ENCODE measurements at regions of chr12 and their contacts with region 1.

Region 1: DNA sequence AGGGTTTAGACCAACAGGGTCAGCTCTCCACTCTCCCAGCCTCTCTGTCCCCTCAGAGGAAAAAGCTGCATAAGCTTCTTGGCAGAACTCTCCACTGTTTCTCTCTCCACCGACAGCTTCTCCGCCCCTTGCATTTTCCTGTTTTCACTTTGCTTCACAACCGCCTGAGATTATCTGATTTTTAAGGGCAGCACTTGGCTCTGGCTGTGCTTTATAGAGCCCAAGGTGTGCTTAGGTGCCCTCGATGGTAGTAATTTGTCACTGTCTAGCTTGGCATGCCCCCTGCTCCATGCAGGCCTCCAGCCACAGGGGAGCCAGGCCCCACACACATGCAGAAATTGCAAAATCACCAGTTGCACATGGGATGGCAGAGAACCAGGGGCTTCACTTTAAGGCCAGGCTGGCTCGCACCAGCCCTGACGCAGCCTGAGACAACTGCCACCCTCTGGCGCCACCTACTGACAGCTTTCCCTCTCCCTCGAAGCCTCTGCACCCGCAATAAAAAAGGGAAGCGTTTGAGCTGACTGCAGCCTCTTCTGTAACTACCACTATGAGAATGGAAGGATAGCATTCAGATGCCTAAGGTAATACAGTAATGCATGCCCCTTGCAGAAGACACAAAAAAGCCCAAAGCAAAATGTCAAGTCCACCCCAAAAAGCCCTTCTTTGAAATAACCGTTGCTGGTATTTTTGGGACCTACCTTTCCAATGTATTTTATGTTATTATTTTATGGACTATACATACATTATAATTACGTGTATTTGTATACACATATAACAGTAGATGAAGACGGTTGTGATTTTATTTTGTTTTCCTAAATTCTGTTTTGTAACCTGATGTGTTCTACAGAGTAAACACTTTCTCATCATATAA is 32.0 kb upstream of the RIMBP2 start:
- DNase-seq: peak; percentile 64 to 83 (median 70)
- ATAC-seq: peak; percentile 61 to 90 (median 88)
- H3K4me3 ChIP-seq: no peak overlapping the region
- H3K27ac ChIP-seq: no peak overlapping the region
- H3K4me1 ChIP-seq: peaks cover 0 to 4% (median 0%) of the 10 kb centered on the region in 12 donors
- H3K27me3 ChIP-seq: peaks cover 0 to 36% (median 3%) of the 10 kb centered on the region in 9 donors
- CTCF ChIP-seq: peak; percentile 66 to 90 (median 82)
- POLR2A ChIP-seq: no peak

Region 2: GRCh38 chr12:130041983-130042812 is 705.9 kb before region 1 on chr12:
- intact Hi-C with region 1: loop called in 5 of 10 experiments (anchors 5 to 10 kb)
- DNase-seq: peak in 1 of 5 donors; percentile 29
- ATAC-seq: no peak
- H3K4me3 ChIP-seq: no peak overlapping the region
- H3K27ac ChIP-seq: no peak overlapping the region
- H3K4me1 ChIP-seq: no peaks in the 10 kb centered on the region
- H3K27me3 ChIP-seq: peaks cover 19 to 90% (median 41%) of the 10 kb centered on the region in 9 donors
- CTCF ChIP-seq: peak; percentile 49 to 79 (median 68)
- POLR2A ChIP-seq: no peak

Region 3: DNA sequence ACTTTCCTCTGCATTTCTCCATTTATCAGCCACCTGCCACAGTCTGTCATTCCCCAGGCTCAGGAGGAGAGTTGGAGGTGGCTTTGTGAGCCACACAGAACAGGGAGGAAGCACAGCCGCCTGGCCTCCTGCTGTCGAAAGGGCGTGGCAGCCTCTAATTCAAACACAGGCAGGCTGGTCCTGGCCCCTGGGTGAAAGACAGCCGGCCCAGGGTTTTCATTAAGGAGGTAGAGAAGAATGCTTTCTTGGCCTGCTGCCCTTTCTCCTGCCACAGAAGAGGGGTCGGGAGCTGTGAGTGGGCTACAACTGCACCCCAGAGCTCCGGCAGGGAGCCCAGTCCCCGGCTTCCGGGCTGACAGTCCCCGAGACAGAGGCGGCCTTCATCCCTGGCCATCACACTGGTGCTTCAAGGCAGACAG is 694.4 kb before region 1 on chr12:
- intact Hi-C with region 1: loop called in 6 of 10 experiments (anchors 5 to 10 kb)
- DNase-seq: no peak
- ATAC-seq: no peak
- H3K4me3 ChIP-seq: no peak overlapping the region
- H3K27ac ChIP-seq: no peak overlapping the region
- H3K4me1 ChIP-seq: no peaks in the 10 kb centered on the region
- H3K27me3 ChIP-seq: peaks cover 0 to 38% (median 7%) of the 10 kb centered on the region in 9 donors
- CTCF ChIP-seq: no peak
- POLR2A ChIP-seq: no peak

Region 4: GRCh38 chr12:130394906-130395305 is 353.2 kb before region 1 on chr12:
- intact Hi-C with region 1: loop called in 8 of 10 experiments (anchors 2 to 10 kb)
- DNase-seq: no peak
- ATAC-seq: no peak
- H3K4me3 ChIP-seq: no peak overlapping the region
- H3K27ac ChIP-seq: no peak overlapping the region
- H3K4me1 ChIP-seq: no peaks in the 10 kb centered on the region
- H3K27me3 ChIP-seq: peaks cover 0 to 8% (median 0%) of the 10 kb centered on the region in 9 donors
- CTCF ChIP-seq: no peak
- POLR2A ChIP-seq: no peak

Region 5: GRCh38 chr12:130401703-130402102 is 346.4 kb before region 1 on chr12:
- intact Hi-C with region 1: loop called (anchors 2 to 10 kb)
- DNase-seq: no peak
- ATAC-seq: peak in 3 of 4 donors; percentile 18 to 66 (median 49)
- H3K4me3 ChIP-seq: no peak overlapping the region
- H3K27ac ChIP-seq: no peak overlapping the region
- H3K4me1 ChIP-seq: no peaks in the 10 kb centered on the region
- H3K27me3 ChIP-seq: peaks cover 0 to 34% (median 2%) of the 10 kb centered on the region in 9 donors
- CTCF ChIP-seq: peak in 8 of 12 donors; percentile 7 to 52 (median 44)
- POLR2A ChIP-seq: no peak